HepG2 (cell line): ENCODE measurements at regions of chr6 and their contacts with region 1.

Region 1: GRCh38 chr6:113115196-113115595 is 741.9 kb upstream of the MARCKS start:
- DNase-seq: no peak
- ATAC-seq: no peak
- H3K4me3 ChIP-seq: no peak overlapping the region
- H3K27ac ChIP-seq: no peak overlapping the region
- H3K4me1 ChIP-seq: no peaks in the 10 kb centered on the region
- H3K27me3 ChIP-seq: no peaks in the 10 kb centered on the region
- CTCF ChIP-seq: no peak
- EP300 ChIP-seq: no peak
- POLR2A ChIP-seq: no peak
- RAD21 ChIP-seq: no peak

Region 2: GRCh38 chr6:112967974-112968373 is 147.2 kb before region 1 on chr6:
- CTCF ChIA-PET with region 1: no interaction called
- POLR2A ChIA-PET with region 1: no interaction called
- in situ Hi-C with region 1: no loop called
- intact Hi-C with region 1: no loop called
- DNase-seq: no peak
- ATAC-seq: no peak
- H3K4me3 ChIP-seq: no peak overlapping the region
- H3K27ac ChIP-seq: no peak overlapping the region
- H3K4me1 ChIP-seq: no peaks in the 10 kb centered on the region
- H3K27me3 ChIP-seq: no peaks in the 10 kb centered on the region
- CTCF ChIP-seq: no peak
- EP300 ChIP-seq: no peak
- POLR2A ChIP-seq: no peak
- RAD21 ChIP-seq: no peak

Region 3: DNA sequence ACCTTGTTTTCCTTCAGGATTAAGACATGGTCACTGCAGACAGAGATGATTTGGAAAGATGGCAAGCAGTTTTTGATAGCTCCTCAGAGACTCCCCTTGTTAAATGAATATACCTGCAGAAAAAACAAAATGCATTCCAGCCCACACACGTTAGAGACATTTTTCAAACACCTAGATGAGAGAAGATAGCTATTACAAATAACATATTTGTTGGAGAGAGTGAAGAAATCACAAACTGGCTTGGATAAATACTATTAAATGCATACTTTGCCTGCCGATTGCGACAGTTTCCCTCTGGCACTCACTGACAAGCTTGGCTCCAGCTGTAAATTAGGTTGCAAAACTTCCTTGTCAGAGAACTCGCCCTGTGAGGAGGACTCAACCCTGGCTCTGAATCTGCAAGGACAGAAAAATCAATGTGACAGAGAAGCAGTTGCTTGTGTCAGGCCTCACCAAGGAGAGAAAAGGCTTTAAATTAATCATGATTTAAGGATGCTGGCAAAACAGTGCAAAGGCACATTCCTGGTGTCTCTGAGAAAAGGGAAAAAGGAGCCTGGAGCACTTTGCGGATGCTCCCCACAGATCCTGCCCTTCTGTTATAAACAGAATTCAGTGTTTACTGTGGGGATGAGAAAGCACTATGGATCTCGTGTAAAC is 318.3 kb after region 1 on chr6:
- CTCF ChIA-PET with region 1: no interaction called
- POLR2A ChIA-PET with region 1: no interaction called
- in situ Hi-C with region 1: no loop called
- intact Hi-C with region 1: loop called (anchors 5 kb)
- DNase-seq: peak; percentile 34
- ATAC-seq: peak; percentile 82
- H3K4me3 ChIP-seq: no peak overlapping the region
- H3K27ac ChIP-seq: no peak overlapping the region
- H3K4me1 ChIP-seq: peaks cover 13% of the 10 kb centered on the region
- H3K27me3 ChIP-seq: no peaks in the 10 kb centered on the region
- CTCF ChIP-seq: no peak
- EP300 ChIP-seq: peak in 1 of 2 experiments; percentile 13; a peak in 1 of 4 replicates
- POLR2A ChIP-seq: no peak
- RAD21 ChIP-seq: no peak